Head of caudate nucleus (tissue), 42 donors: ENCODE measurements at regions of chr15 and their contacts with region 1.

Region 1: DNA sequence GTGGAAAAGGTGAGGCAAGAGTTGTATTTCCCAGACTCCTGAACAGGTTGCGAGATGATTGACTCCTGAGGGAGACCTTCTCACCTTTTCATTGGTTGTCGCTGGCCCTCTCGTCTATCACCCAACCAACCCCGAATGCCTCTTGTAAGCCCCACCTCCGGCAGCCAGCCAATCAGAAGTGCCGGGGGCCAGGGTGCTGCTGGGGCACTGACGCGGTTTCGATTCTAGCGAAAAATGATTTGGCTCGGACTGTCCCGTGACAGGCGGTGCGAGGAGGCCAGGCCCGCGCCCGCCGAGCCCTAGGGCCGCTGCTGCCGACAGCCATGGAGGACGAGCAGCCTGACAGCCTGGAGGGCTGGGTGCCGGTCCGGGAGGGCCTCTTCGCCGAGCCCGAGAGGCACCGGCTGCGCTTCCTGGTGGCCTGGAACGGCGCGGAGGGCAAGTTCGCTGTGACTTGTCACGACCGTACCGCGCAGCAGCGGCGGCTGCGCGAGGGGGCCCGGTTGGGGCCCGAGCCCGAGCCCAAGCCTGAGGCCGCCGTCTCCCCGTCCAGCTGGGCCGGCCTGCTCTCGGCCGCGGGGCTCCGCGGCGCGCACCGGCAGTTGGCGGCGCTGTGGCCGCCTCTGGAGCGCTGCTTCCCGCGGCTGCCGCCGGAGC is at the start of gene WHAMM:
- DNase-seq: peak; percentile 97 to 100 (median 99)

Region 2: GRCh38 chr15:82749951-82750830 is 59.3 kb before region 1 on chr15:
- intact Hi-C with region 1: loop called (anchors 5 kb)
- DNase-seq: peak; percentile 89 to 98 (median 95)